OCI-LY7 (cell line): ENCODE measurements at regions of chr1 and their contacts with region 1.

Region 1: GRCh38 chr1:168054117-168054516 is 82.6 kb downstream of the GPR161 start:
- DNase-seq: peak; percentile 15
- H3K4me3 ChIP-seq: no peak overlapping the region
- H3K27ac ChIP-seq: no peak overlapping the region
- H3K4me1 ChIP-seq: peaks cover 5% of the 10 kb centered on the region
- CTCF ChIP-seq: no peak

Region 2: DNA sequence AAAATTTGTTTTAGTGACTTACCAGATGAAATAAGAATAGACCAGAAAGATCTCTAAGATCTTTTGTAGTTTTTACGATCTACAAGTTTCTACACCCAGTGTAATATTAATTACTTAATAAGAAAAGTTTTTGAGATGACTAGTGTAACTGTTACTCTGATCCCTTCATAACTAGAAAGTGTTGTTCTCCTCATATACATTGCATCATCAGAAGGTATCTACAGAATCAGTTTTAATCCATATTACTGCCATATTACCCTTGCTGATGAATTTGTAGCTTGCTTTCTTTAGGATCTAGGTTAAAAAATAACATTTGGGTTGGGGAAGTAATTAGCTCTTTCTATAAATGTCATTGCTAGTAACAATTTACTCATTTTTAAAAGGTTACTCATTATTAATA is 10.1 kb after region 1 on chr1:
- CTCF ChIA-PET with region 1: no interaction called
- POLR2A ChIA-PET with region 1: interaction called, 10 read pairs
- intact Hi-C with region 1: no loop called
- DNase-seq: no peak
- H3K4me3 ChIP-seq: no peak overlapping the region
- H3K27ac ChIP-seq: no peak overlapping the region
- H3K4me1 ChIP-seq: no peaks in the 10 kb centered on the region
- CTCF ChIP-seq: no peak

Region 3: DNA sequence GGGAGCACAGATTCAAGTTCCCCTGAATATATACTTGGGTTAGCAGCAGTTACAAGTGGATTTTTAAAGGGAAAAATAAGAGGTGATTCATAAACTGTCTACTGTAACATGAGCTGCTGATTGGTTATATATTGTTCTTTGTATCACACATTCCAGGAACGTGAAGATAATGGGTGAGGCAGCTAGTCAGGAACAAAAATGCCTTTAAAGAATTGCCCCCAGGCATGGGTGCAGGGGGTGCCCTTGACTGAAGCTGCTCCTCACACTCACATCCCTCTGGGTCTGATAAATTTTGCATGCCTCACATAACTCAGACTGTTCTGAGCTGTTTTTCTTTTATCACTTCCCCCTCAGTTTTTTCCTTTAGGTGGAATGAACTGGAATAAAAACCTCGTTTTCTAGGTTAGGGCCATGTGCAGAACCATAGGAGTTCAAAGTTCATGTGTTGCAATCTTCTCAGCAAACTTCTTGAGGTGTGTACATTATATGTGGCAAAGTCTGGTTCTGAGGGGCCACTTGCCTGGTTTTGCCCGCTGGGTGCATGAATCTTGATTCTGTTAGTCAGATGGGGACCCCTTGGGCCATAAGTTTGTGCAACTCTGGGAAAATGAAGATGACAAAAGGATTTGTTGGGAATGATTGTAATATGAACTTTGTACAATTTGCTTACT is 247.7 kb after region 1 on chr1:
- CTCF ChIA-PET with region 1: no interaction called
- POLR2A ChIA-PET with region 1: no interaction called
- intact Hi-C with region 1: no loop called
- DNase-seq: no peak
- H3K4me3 ChIP-seq: no peak overlapping the region
- H3K27ac ChIP-seq: no peak overlapping the region
- H3K4me1 ChIP-seq: no peaks in the 10 kb centered on the region
- CTCF ChIP-seq: no peak